ENCODE measurements at regions of chr3 and their contacts with region 1.

Region 1: GRCh38 chr3:10224784-10225665 is 23.2 kb upstream of the TATDN2 start:
- DNase-seq: peak; percentile 79
- ATAC-seq: peak; percentile 46
- H3K4me3 ChIP-seq: no peak overlapping the region
- H3K4me3 Mint-ChIP-seq: peak overlapping the region; percentile 67
- H3K27ac ChIP-seq: peak overlapping the region in 1 of 2 donors; percentile 1
- H3K27ac Mint-ChIP-seq: peak overlapping the region; percentile 83
- H3K4me1 ChIP-seq: peaks cover 40 to 66% of the 10 kb centered on the region in 2 donors
- H3K4me1 Mint-ChIP-seq: peaks cover 63% of the 10 kb centered on the region
- H3K27me3 ChIP-seq: no peaks in the 10 kb centered on the region
- H3K27me3 Mint-ChIP-seq: no peaks in the 10 kb centered on the region
- CTCF ChIP-seq: peak; percentile 83

Region 2: GRCh38 chr3:10142707-10143566 is 82.1 kb before region 1 on chr3:
- CTCF ChIA-PET with region 1: interaction called, 4 read pairs
- POLR2A ChIA-PET with region 1: interaction called, 12 read pairs
- intact Hi-C with region 1: loop called (anchors 2 kb)
- DNase-seq: peak; percentile 31
- ATAC-seq: no peak
- H3K4me3 ChIP-seq: peak overlapping the region; percentile 8 to 91 (median 77)
- H3K4me3 Mint-ChIP-seq: peak overlapping the region; percentile 95
- H3K27ac ChIP-seq: peak overlapping the region; percentile 88 to 96
- H3K27ac Mint-ChIP-seq: peak overlapping the region; percentile 97
- H3K4me1 ChIP-seq: peaks cover 28 to 50% of the 10 kb centered on the region in 2 donors
- H3K4me1 Mint-ChIP-seq: peaks cover 32% of the 10 kb centered on the region
- H3K27me3 ChIP-seq: no peaks in the 10 kb centered on the region
- H3K27me3 Mint-ChIP-seq: no peaks in the 10 kb centered on the region
- CTCF ChIP-seq: no peak

Region 3: DNA sequence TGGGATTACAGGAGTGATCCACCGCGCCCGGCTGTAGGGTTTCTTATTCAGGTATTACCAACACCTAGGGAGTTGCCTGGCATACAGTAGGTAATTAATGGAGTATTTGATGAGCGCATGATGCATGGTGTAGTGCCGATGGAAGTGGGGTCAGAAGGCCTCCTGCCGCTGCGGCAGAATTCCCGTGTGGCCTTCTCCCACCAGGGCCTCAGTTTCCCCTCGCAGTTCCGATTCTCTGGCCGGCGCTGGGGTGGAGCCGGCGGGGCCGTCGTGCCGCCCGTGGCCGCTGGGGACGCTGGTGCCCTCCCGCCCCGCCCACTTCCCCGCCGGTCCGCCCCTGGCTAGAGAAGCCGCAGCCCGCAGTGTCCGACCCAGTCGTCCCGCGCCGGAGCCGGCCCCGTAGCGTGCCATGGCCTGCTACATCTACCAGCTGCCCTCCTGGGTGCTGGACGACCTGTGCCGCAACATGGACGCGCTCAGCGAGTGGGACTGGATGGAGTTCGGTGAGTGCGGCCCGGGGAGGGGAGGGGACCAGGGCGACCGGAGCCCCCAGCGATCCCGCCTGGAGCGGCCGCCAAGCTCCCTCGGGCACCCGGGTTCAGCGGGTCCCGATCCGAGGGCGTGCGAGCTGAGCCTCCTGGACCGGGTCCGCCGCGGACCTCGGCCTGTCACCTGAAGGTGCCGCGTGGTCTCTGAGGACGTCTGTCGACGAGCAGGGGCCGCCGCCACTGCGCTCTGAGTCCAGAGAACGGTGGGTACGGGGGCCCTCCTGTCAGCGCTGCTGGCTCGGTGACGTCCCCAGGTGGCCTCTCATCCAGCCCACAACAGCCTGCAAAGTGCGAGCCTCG is 60.3 kb before region 1 on chr3 and contains the start of gene IRAK2:
- CTCF ChIA-PET with region 1: interaction called, 59 read pairs
- POLR2A ChIA-PET with region 1: interaction called, 4 read pairs
- intact Hi-C with region 1: loop called (anchors 1 kb)
- DNase-seq: peak; percentile 83
- ATAC-seq: peak; percentile 91
- H3K4me3 ChIP-seq: peak within 1 kb of the TSS; percentile 66 to 95 (median 84)
- H3K4me3 Mint-ChIP-seq: peak within 1 kb of the TSS; percentile 91
- H3K27ac ChIP-seq: peak within 1 kb of the TSS; percentile 43 to 79
- H3K27ac Mint-ChIP-seq: peak within 1 kb of the TSS; percentile 65
- H3K4me1 ChIP-seq: peaks cover 15 to 44% of the 10 kb centered on the region in 2 donors
- H3K4me1 Mint-ChIP-seq: peaks cover 37% of the 10 kb centered on the region
- H3K27me3 ChIP-seq: no peaks in the 10 kb centered on the region
- H3K27me3 Mint-ChIP-seq: no peaks in the 10 kb centered on the region
- CTCF ChIP-seq: peak; percentile 98
- total RNA-seq, gene IRAK2: 23.2 and 24.6 TPM in 2 replicates

Region 4: GRCh38 chr3:10180738-10181295 is 44.2 kb before region 1 on chr3:
- CTCF ChIA-PET with region 1: interaction called, 15 read pairs
- POLR2A ChIA-PET with region 1: interaction called, 3 read pairs
- intact Hi-C with region 1: loop called (anchors 5 kb)
- DNase-seq: no peak
- ATAC-seq: no peak
- H3K4me3 ChIP-seq: no peak overlapping the region
- H3K4me3 Mint-ChIP-seq: peak overlapping the region; percentile 70
- H3K27ac ChIP-seq: peak overlapping the region; percentile 12 to 66
- H3K27ac Mint-ChIP-seq: peak overlapping the region; percentile 84
- H3K4me1 ChIP-seq: peaks cover 18 to 31% of the 10 kb centered on the region in 2 donors
- H3K4me1 Mint-ChIP-seq: peaks cover 28% of the 10 kb centered on the region
- H3K27me3 ChIP-seq: no peaks in the 10 kb centered on the region
- H3K27me3 Mint-ChIP-seq: no peaks in the 10 kb centered on the region
- CTCF ChIP-seq: no peak

Region 5: DNA sequence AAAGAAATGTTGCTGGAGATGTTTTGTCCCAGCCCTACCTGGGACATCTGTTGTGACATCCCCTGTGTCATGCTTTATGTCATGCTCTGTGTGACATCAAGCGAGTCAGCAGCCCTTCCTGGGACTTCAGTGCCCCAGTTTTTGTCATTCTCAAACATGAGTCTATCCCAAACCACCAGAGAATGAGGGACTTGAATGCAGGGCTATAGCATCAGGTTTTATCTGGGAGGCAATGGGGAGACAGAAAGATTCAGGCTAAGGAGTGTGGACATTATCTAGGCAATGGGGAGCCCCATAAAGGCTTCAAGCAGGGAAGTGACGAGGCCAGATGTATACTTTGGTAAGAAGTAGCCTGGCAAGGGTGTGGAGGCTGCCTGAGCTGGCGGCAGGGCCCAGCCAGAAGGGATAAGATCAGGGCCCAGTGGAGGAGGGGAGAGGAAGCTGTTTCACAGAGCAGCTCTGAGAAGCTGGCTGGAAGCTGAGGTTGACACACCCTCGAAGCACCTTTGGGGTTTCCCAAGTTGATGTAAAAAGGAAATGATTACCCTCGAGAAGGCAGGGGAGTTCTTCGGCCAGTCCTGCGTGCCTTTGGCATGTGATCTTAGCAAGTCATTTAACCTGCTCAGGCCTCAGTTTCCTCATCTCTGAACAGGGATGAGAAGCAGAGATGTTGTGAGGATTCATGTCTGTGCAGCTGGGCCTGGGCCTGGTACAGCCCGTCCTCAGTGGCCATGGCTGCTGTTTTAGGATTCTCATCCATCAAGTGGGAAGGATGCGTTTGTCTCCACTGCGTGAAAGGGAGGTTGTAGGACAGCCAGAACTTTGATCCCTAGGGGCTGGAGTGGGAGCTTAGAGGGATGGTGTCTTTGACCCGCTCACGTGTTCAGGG is 26.0 kb before region 1 on chr3:
- CTCF ChIA-PET with region 1: interaction called, 44 read pairs
- POLR2A ChIA-PET with region 1: interaction called, 16 read pairs
- intact Hi-C with region 1: no loop called
- DNase-seq: peak; percentile 94
- ATAC-seq: peak; percentile 63
- H3K4me3 ChIP-seq: peak overlapping the region in 2 of 5 experiments; percentile 9 to 40
- H3K4me3 Mint-ChIP-seq: peak overlapping the region; percentile 82
- H3K27ac ChIP-seq: peak overlapping the region; percentile 96 to 97
- H3K27ac Mint-ChIP-seq: peak overlapping the region; percentile 97
- H3K4me1 ChIP-seq: peaks cover 76 to 80% of the 10 kb centered on the region in 2 donors
- H3K4me1 Mint-ChIP-seq: peaks cover 67% of the 10 kb centered on the region
- H3K27me3 ChIP-seq: no peaks in the 10 kb centered on the region
- H3K27me3 Mint-ChIP-seq: no peaks in the 10 kb centered on the region
- CTCF ChIP-seq: no peak

Measured in B cell (primary cell).